HepG2 (cell line): ENCODE measurements at regions of chr13 and their contacts with region 1.

Region 1: GRCh38 chr13:32261567-32261966 is 53.6 kb downstream of the ZAR1L start:
- DNase-seq: no peak
- ATAC-seq: peak; percentile 19; the same call in 2 of the 3 replicates
- H3K4me3 ChIP-seq: no peak overlapping the region
- H3K27ac ChIP-seq: peak overlapping the region; percentile 62
- H3K4me1 ChIP-seq: peaks cover 93% of the 10 kb centered on the region
- H3K27me3 ChIP-seq: no peaks in the 10 kb centered on the region
- CTCF ChIP-seq: no peak
- EP300 ChIP-seq: no peak
- POLR2A ChIP-seq: no peak
- RAD21 ChIP-seq: no peak

Region 2: GRCh38 chr13:32246468-32246867 is 15.1 kb before region 1 on chr13:
- CTCF ChIA-PET with region 1: no interaction called
- POLR2A ChIA-PET with region 1: interaction called, 41 read pairs
- in situ Hi-C with region 1: no loop called
- intact Hi-C with region 1: loop called (anchors 1 kb)
- DNase-seq: peak; percentile 67
- ATAC-seq: peak; percentile 95
- H3K4me3 ChIP-seq: no peak overlapping the region
- H3K27ac ChIP-seq: no peak overlapping the region
- H3K4me1 ChIP-seq: peaks cover 62% of the 10 kb centered on the region
- H3K27me3 ChIP-seq: no peaks in the 10 kb centered on the region
- CTCF ChIP-seq: peak; percentile 87
- EP300 ChIP-seq: no peak
- POLR2A ChIP-seq: no peak
- RAD21 ChIP-seq: peak; percentile 75